Transverse colon (tissue), 4 donors: ENCODE measurements at regions of chr17 and their contacts with region 1.

Region 1: DNA sequence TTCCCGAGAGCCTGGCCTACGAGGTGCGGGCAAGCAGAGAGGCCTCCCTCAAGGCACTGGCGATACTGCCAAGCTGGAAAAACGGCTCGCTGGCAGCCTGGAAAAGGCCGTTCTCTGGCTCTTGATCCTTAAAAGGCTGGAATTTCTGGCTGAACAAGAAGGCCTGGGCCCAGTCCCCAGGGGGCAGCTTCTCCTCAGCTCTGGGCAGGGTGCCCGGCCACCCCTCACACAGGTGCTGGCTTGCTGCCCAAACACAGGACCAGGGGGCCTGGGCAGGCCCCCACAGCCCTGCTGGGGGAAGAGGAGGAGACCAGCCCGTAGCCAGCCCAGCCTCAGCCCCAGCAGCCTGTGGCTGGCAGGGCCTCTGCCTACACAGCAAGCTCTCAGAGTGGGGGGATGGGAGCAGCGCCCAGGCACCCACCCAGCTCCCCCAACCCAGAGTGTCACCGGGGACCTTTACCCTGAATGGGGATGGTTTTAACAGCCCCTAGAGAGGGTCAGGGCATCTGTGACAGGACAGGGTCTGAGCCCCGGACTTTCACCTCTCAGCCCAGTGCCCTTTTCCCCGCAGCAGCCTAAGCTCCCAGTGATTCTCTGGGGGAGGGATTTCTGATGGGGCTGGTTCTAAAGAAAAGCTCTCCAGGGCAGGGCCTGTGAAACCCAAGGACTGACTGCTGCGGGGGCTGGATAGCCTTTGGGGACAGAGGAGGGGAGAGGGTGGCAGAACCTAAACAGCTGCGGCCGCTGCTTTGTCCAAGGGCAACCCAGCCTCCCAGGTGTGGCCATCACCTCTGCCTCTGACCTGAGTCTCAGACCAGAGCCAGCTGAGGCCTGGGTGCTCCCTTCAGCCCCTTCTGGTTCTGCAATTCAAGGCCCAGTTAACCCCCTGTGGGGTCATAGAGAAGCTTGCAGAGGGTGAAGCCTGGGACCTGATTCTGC is 38.6 kb upstream of the TOB1 start:
- DNase-seq: peak; percentile 48
- H3K4me3 ChIP-seq: no peak overlapping the region
- H3K27ac ChIP-seq: peak overlapping the region; percentile 82 to 95 (median 92)
- H3K4me1 ChIP-seq: peaks cover 23 to 34% (median 33%) of the 10 kb centered on the region in 4 donors
- H3K27me3 ChIP-seq: no peaks in the 10 kb centered on the region
- CTCF ChIP-seq: no peak
- EP300 ChIP-seq: no peak
- POLR2A ChIP-seq: peak; percentile 7

Region 2: DNA sequence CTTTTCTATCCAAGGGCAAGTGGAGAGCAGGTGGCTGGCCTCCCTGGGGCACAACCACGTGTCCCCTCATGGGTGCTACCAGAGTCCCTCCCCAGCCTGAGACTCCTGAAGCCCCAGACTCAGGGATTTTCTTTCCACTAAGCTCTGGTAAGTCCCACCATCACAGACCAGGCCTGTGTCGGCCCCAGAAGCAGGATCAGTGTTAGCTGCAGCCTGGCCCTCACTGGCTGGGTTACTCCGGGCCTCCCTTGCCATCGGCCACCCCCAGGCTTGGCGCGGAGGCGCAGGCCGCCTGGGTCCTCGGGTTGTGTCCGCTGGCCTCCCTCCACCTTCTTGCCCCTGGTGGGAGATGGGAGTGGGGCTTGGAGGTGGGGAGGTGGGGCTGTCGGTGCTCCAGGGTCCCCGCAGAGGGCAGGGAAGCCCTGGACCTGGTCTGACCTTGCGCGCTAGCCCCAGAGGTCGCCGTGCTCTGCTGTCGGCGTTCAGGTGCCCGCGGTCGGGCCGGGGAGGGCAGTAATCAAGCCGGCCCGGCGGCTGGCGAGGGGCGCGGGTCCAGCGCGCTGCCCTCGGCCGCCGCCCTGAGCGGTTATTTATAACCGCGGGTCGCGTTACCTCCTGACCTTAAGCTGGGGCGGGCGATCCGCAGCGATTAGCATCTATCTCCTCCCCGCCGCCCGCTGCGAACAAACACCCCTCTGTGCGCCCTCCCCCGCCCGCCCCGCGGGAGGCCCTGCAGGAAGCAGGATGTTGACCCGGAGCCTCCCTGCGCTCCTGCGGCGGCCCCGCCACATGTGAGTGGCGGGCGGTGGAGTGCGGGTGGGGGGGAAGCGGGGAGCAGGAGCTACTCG is 39.5 kb after region 1 on chr17:
- in situ Hi-C with region 1: no loop called
- intact Hi-C with region 1: loop called (anchors 5 kb)
- DNase-seq: peak; percentile 92
- H3K4me3 ChIP-seq: peak overlapping the region; percentile 11 to 61 (median 34)
- H3K27ac ChIP-seq: peak overlapping the region; percentile 89 to 95 (median 92)
- H3K4me1 ChIP-seq: peaks cover 25 to 63% (median 46%) of the 10 kb centered on the region in 4 donors
- H3K27me3 ChIP-seq: no peaks in the 10 kb centered on the region
- CTCF ChIP-seq: peak in 1 of 5 experiments; percentile 42
- EP300 ChIP-seq: no peak
- POLR2A ChIP-seq: peak; percentile 93